ENCODE measurements at regions of chr5 and their contacts with region 1.

Region 1: DNA sequence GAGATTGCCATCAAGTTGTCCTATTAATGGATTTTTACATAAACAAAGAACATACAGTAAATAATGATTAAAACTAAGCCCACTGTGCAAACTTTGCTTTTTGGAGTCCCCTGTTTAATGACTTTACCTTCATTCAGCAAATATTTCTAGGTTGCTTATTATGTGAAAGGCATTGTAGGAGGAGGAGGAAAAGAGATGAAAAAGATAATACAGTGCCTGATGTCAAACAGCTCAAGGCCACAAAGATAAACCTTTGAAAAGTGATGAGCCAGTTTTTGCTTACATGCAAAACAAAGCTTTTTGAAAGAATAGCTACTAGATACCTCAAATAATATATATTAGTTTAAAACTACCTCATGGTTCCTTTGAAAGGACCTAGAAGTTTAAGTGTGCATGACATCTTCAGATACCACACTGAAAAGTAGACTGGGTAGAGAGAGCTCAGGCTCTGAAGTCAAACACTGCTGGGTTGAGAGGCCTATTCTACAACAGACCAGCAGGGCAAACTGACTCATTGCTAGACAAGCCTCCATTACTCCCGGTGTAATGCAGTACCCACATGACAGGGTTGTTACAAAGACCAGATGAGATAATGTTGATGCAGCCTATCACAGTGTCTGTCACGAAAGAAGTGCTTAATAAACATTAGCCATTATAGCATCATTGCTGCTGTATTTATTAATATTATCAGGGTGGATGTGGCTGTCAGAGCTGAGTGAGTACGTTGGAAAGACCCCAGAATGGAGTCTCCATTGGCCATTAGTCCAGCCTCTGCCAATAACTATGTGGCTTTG is 11.8 kb downstream of the DEPDC1B start:
- DNase-seq: peak in 1 of 5 donors; percentile 17
- H3K4me3 ChIP-seq: no peak overlapping the region
- H3K4me3 Mint-ChIP-seq: no peak overlapping the region
- H3K27ac ChIP-seq: no peak overlapping the region
- H3K27ac Mint-ChIP-seq: no peak overlapping the region
- H3K4me1 ChIP-seq: no peaks in the 10 kb centered on the region
- H3K4me1 Mint-ChIP-seq: peaks cover 0 to 11% (median 3%) of the 10 kb centered on the region in 4 donors
- H3K27me3 ChIP-seq: no peaks in the 10 kb centered on the region
- H3K27me3 Mint-ChIP-seq: no peaks in the 10 kb centered on the region

Region 2: GRCh38 chr5:60668686-60669304 is 19.3 kb before region 1 on chr5:
- CTCF ChIA-PET with region 1: interaction called, 37 read pairs
- POLR2A ChIA-PET with region 1: no interaction called
- intact Hi-C with region 1: no loop called
- DNase-seq: peak in 4 of 5 donors; percentile 2 to 26 (median 20)
- H3K4me3 ChIP-seq: no peak overlapping the region
- H3K4me3 Mint-ChIP-seq: no peak overlapping the region
- H3K27ac ChIP-seq: no peak overlapping the region
- H3K27ac Mint-ChIP-seq: no peak overlapping the region
- H3K4me1 ChIP-seq: no peaks in the 10 kb centered on the region
- H3K4me1 Mint-ChIP-seq: no peaks in the 10 kb centered on the region
- H3K27me3 ChIP-seq: no peaks in the 10 kb centered on the region
- H3K27me3 Mint-ChIP-seq: no peaks in the 10 kb centered on the region

Region 3: GRCh38 chr5:60677844-60678664 is 10.1 kb before region 1 on chr5:
- CTCF ChIA-PET with region 1: interaction called, 14 read pairs
- POLR2A ChIA-PET with region 1: no interaction called
- intact Hi-C with region 1: no loop called
- DNase-seq: peak in 4 of 5 donors; percentile 26 to 33 (median 28)
- H3K4me3 ChIP-seq: no peak overlapping the region
- H3K4me3 Mint-ChIP-seq: peak overlapping the region in 3 of 8 donors; percentile 5 to 46 (median 44)
- H3K27ac ChIP-seq: no peak overlapping the region
- H3K27ac Mint-ChIP-seq: no peak overlapping the region
- H3K4me1 ChIP-seq: peaks cover 7% of the 10 kb centered on the region
- H3K4me1 Mint-ChIP-seq: peaks cover 0 to 4% (median 1%) of the 10 kb centered on the region in 4 donors
- H3K27me3 ChIP-seq: no peaks in the 10 kb centered on the region
- H3K27me3 Mint-ChIP-seq: peaks cover 0 to 1% of the 10 kb centered on the region in 2 donors

Region 4: GRCh38 chr5:60699530-60700382 is 11.6 kb after region 1 on chr5 and contains the start of gene DEPDC1B:
- CTCF ChIA-PET with region 1: interaction called, 23 read pairs
- POLR2A ChIA-PET with region 1: interaction called, 4 read pairs
- intact Hi-C with region 1: no loop called
- DNase-seq: peak; percentile 81 to 86 (median 83)
- H3K4me3 ChIP-seq: peak within 1 kb of the TSS; percentile 98 to 99
- H3K4me3 Mint-ChIP-seq: peak within 1 kb of the TSS; percentile 91 to 98 (median 94)
- H3K27ac ChIP-seq: peak within 1 kb of the TSS; percentile 61
- H3K27ac Mint-ChIP-seq: peak within 1 kb of the TSS; percentile 75 to 92 (median 88)
- H3K4me1 ChIP-seq: peaks cover 18% of the 10 kb centered on the region
- H3K4me1 Mint-ChIP-seq: peaks cover 9 to 28% (median 20%) of the 10 kb centered on the region in 4 donors
- H3K27me3 ChIP-seq: no peaks in the 10 kb centered on the region
- H3K27me3 Mint-ChIP-seq: no peaks in the 10 kb centered on the region
- total RNA-seq, gene DEPDC1B: 0.19 to 0.70 TPM

Measured in CD4-positive, alpha-beta memory T cell (primary cell).